Dorsolateral prefrontal cortex (tissue), 120 donors: ENCODE measurements at regions of chr17 and their contacts with region 1.

Region 1: GRCh38 chr17:81871387-81872230 is 472 bp upstream of the ARHGDIA start:
- DNase-seq: peak; percentile 60 to 94 (median 90)
- H3K4me3 ChIP-seq: peak overlapping the region; percentile 66 to 100 (median 93)
- H3K27ac ChIP-seq: peak overlapping the region; percentile 78 to 98 (median 96)
- H3K27me3 ChIP-seq: no peaks in the 10 kb centered on the region
- CTCF ChIP-seq: peak in 55 of 56 donors; percentile 39 to 85 (median 66)

Region 2: DNA sequence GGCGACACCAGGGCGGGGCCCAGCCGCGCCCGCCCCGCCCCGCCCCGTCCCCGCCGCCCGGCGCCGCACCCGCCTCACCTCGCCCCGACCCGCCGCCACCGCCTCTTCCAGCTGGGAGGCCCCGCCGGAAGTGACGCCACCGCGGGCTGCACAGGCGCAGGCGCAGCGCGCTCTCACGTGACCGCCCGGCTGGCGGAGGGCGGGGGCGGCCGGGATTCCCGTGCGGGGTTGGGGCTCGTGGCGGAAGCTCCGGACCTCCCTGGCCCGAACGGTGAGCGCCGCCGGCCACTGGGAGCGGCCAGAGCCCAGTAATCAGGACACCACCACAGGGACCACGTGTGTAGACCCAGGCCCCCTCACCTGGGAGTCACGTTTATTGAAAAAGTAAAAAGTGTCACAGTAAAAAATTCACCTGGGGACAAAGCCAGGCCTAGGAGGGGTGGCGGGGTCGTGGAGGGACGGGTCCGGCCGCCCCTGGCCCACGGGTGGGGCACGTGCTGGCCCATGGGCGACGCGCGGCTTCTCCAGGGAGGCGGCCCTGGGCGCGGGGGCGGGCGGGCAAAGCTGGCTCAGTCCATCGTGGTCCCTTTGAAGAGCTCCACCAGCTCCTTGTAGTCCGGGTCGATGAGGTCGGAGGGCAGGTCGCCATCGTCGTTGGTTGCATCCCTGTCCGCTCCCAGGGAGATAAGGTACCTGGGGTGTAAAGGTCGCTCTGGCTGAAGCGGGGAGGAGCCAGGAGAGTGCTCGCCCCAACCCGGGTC is 38.3 kb before region 1 on chr17 and contains the start of gene MCRIP1:
- intact Hi-C with region 1: loop called in 1 of 2 experiments (anchors 2 kb)
- DNase-seq: peak; percentile 73 to 97 (median 86)
- H3K4me3 ChIP-seq: peak within 1 kb of the TSS; percentile 75 to 97 (median 92)
- H3K27ac ChIP-seq: peak within 1 kb of the TSS in 58 of 59 donors; percentile 6 to 95 (median 87)
- H3K27me3 ChIP-seq: no peaks in the 10 kb centered on the region
- CTCF ChIP-seq: peak in 1 of 56 donors; percentile 20
- total RNA-seq, gene MCRIP1: 102 to 185 (median 136) TPM

Region 3: GRCh38 chr17:81860756-81861518 is 10.7 kb before region 1 on chr17:
- intact Hi-C with region 1: loop called in 1 of 2 experiments (anchors 1 kb)
- DNase-seq: peak; percentile 99 to 100 (median 100)
- H3K4me3 ChIP-seq: peak overlapping the region; percentile 55 to 100 (median 90)
- H3K27ac ChIP-seq: peak overlapping the region in 58 of 59 donors; percentile 54 to 97 (median 86)
- H3K27me3 ChIP-seq: no peaks in the 10 kb centered on the region
- CTCF ChIP-seq: peak in 14 of 56 donors; percentile 9 to 49 (median 15)

Region 4: DNA sequence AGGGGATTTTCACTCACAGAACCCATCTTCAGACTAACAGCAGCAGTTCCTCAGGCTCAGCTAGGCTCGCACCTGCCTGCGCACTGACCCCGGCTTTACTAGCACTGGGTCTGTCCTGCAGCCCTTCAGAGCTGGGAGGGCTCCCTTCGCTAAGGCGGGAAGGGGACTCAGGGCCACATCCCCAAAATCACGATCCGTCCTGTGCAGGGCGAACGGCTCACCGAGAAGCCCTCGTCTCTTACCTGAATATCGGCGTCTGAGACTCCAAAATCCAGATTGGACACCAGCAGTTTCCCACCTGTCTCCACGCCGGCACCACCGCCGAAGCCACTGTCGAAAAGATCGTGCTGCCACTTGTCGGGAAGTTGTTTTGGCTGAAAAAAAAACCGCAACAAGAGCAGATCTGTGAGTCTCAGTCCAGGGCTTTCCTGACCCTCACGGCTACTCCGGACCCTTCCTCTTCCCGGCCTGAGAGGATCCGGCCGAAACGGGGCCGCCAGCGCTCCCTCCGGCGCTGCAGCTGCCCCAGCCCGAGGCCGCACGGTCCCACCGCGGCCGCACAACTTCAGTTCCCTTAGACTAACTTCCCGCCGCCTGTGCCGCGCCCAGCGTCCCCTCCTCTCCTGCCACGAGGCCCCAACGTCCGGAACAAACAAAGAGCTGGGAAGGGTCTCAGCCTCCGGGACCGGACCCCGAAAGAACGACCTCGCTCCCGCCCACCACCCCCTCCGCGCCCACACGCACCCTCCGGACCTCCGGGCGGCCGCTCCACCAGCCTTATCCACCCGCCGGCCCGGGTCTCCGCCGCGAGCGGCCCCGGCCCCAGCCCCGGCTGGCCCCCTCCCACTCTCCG is 19.1 kb after region 1 on chr17:
- intact Hi-C with region 1: loop called (anchors 1 to 2 kb)
- DNase-seq: peak in 1 of 10 donors; percentile 41
- H3K4me3 ChIP-seq: peak overlapping the region; percentile 59 to 100 (median 94)
- H3K27ac ChIP-seq: peak overlapping the region in 28 of 59 donors; percentile 6 to 94 (median 61)
- H3K27me3 ChIP-seq: no peaks in the 10 kb centered on the region
- CTCF ChIP-seq: no peak

Region 5: GRCh38 chr17:81927653-81928543 is 56.3 kb after region 1 on chr17 and contains the start of gene MAFG:
- intact Hi-C with region 1: loop called in 1 of 2 experiments (anchors 5 kb)
- DNase-seq: peak; percentile 85 to 94 (median 89)
- H3K4me3 ChIP-seq: peak within 1 kb of the TSS; percentile 59 to 95 (median 84)
- H3K27ac ChIP-seq: peak within 1 kb of the TSS in 58 of 59 donors; percentile 31 to 95 (median 84)
- H3K27me3 ChIP-seq: no peaks in the 10 kb centered on the region
- CTCF ChIP-seq: peak in 45 of 56 donors; percentile 4 to 66 (median 40)
- total RNA-seq, gene MAFG: 30.1 to 60.2 (median 41.1) TPM

Region 6: GRCh38 chr17:82022981-82023374 is 151.4 kb after region 1 on chr17 and contains the start of gene LRRC45:
- intact Hi-C with region 1: loop called in 1 of 2 experiments (anchors 5 kb)
- DNase-seq: peak; percentile 99 to 100 (median 100)
- H3K4me3 ChIP-seq: peak within 1 kb of the TSS; percentile 71 to 100 (median 91)
- H3K27ac ChIP-seq: peak within 1 kb of the TSS in 28 of 59 donors; percentile 11 to 79 (median 52)
- H3K27me3 ChIP-seq: no peaks in the 10 kb centered on the region
- CTCF ChIP-seq: peak in 14 of 56 donors; percentile 7 to 50 (median 26)
- total RNA-seq, gene LRRC45: 6.8 to 22.2 (median 12.3) TPM

Region 7: DNA sequence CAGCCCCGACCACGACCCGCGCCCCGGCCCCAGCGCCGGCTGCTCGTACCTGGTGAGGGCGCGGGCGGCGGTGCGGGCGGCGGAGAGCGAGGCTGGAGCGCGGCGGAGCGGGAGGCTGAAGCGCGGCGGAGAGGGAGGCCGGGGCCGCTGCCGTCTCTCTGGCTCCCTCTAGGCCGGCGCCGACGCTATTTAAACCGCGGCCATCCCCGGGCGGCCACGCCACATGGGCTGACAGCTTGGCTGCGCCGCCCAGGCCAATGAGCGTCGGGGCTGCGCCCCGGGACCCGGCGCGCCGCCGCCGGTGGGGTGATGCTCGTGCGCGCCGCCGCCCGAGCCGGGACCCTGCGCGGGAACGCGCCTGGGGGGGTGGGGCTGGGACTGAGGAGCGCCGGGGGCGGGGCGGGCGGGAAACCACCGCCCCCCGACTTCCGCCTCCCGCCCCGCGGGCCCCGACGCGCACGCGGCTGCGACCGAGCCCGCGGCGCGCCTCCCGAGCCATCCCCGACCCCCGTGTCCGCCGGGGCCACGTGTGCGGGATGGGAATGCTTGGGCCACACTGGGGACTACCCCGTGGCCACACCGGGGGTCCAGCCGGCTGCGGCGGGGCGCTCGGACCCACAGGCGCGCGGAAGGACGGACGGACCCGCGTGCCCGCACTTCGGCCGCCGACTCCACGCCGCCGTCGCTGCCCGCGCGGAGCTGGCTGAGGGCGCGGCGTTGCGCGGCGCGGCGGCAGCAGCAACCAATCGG is 226.6 kb after region 1 on chr17 and contains the start of gene FASN:
- intact Hi-C with region 1: loop called in 1 of 2 experiments (anchors 5 kb)
- DNase-seq: peak; percentile 81 to 94 (median 91)
- H3K4me3 ChIP-seq: peak within 1 kb of the TSS; percentile 64 to 98 (median 86)
- H3K27ac ChIP-seq: peak within 1 kb of the TSS; percentile 61 to 98 (median 95)
- H3K27me3 ChIP-seq: no peaks in the 10 kb centered on the region
- CTCF ChIP-seq: peak in 49 of 56 donors; percentile 6 to 65 (median 42)
- total RNA-seq, gene FASN: 137 to 275 (median 201) TPM